ENCODE measurements at regions of chr12 and their contacts with region 1.

Region 1: DNA sequence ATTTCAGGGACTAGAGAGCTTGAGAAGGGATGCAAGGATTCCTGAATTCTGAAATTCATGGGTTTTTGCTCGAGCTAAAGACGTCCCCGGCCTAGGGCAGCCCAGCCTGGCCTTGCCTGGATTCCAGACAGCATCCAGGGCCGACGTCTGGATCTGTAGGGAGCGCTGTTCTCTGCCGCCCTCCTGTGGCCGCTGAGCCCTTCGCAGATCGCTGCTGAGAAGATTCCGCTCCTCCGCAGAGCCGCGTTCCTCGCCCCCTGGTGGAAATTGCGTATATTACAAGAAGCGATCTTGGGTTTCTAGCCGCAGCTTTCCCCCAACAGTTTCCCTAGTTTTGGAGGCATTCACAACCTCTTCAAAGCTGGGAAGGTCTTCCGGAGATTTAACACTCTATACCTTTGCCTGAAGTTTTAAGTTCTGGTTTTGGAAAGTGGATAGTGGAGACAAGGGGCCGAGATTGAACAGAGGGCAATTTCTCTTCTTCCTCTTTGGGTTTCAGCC is 5.1 kb downstream of the CISTR start:
- DNase-seq: peak; percentile 86
- H3K4me3 ChIP-seq: no peak overlapping the region
- H3K27ac ChIP-seq: no peak overlapping the region
- H3K27me3 ChIP-seq: peaks cover 68% of the 10 kb centered on the region
- CTCF ChIP-seq: peak; percentile 100

Region 2: DNA sequence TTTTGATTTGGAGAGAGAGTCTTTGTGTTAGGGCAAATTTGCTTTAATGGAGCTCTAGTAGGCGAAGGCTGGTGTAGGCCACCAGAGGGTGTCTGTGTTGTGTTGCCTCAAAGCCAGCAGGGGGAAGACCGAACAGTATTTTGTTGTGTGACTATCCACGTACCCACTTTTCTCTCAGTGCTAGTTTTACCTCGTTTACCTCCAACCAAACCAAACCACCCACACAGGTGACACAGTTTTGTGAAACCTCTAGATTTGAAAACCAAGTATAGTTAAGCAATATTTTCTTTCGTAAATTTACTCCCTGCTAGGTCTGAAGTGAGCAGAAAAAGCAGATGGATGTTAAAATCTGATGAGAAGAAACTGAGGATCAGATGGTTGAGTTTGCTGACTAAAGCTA is 203.1 kb before region 1 on chr12:
- CTCF ChIA-PET with region 1: interaction called, 22 read pairs
- POLR2A ChIA-PET with region 1: no interaction called
- DNase-seq: peak; percentile 41
- H3K4me3 ChIP-seq: no peak overlapping the region
- H3K27ac ChIP-seq: peak overlapping the region; percentile 52
- H3K27me3 ChIP-seq: no peaks in the 10 kb centered on the region
- CTCF ChIP-seq: peak; percentile 98

Region 3: GRCh38 chr12:53696285-53696654 is 50.4 kb before region 1 on chr12:
- CTCF ChIA-PET with region 1: interaction called, 314 read pairs
- POLR2A ChIA-PET with region 1: no interaction called
- DNase-seq: peak; percentile 41
- H3K4me3 ChIP-seq: no peak overlapping the region
- H3K27ac ChIP-seq: no peak overlapping the region
- H3K27me3 ChIP-seq: peaks cover 46% of the 10 kb centered on the region
- CTCF ChIP-seq: no peak

Region 4: GRCh38 chr12:53719649-53720048 is 27.0 kb before region 1 on chr12:
- CTCF ChIA-PET with region 1: interaction called, 439 read pairs
- POLR2A ChIA-PET with region 1: no interaction called
- DNase-seq: no peak
- H3K4me3 ChIP-seq: no peak overlapping the region
- H3K27ac ChIP-seq: no peak overlapping the region
- H3K27me3 ChIP-seq: no peaks in the 10 kb centered on the region
- CTCF ChIP-seq: no peak

Region 5: GRCh38 chr12:53757095-53757770 is 10.6 kb after region 1 on chr12:
- CTCF ChIA-PET with region 1: interaction called, 91 read pairs
- POLR2A ChIA-PET with region 1: no interaction called
- DNase-seq: no peak
- H3K4me3 ChIP-seq: no peak overlapping the region
- H3K27ac ChIP-seq: no peak overlapping the region
- H3K27me3 ChIP-seq: peaks cover 46% of the 10 kb centered on the region
- CTCF ChIP-seq: peak; percentile 92

Region 6: GRCh38 chr12:53806721-53807120 is 60.1 kb after region 1 on chr12:
- CTCF ChIA-PET with region 1: interaction called, 13 read pairs
- POLR2A ChIA-PET with region 1: no interaction called
- DNase-seq: peak; percentile 37
- H3K4me3 ChIP-seq: no peak overlapping the region
- H3K27ac ChIP-seq: peak overlapping the region; percentile 31
- H3K27me3 ChIP-seq: peaks cover 9% of the 10 kb centered on the region
- CTCF ChIP-seq: no peak

Region 7: DNA sequence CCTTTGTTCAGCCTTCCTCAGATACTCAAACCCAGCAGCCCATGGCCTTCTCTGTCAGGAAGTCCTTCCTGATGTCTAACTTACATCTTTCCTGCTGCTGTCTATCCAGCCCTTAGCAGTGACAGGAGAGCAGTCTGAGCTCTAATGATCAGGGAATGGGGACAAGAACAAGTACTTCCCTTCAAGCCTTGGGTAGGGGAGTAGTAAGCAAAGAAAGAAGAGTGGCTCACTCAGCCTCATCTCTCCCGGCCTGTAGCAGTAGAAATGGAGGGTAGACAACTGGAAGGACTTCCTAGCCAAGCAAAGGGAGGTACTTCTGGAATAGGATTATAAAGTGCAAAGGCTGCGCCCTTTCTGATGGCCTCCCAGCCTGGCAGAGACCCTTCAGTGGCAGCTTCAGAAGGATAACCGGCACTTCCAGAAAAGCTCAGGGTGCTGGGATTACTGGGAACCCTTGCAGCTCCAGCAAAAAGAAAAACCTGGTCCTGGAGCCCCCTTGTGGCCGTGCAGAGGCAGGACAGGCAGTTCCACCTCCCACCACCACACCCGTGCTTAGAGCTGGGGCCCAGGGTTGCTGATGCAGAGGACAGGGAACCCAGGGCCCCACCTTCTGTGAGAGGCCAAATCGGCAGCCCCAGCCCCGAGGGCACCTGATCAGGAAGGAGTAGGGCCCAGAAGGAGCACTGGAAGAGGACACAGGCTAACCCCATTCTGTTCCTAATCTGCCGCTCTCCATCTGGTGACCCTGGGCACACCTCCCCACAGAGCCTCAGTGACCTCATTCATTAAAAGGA is 454.6 kb after region 1 on chr12:
- CTCF ChIA-PET with region 1: interaction called, 11 read pairs
- POLR2A ChIA-PET with region 1: no interaction called
- DNase-seq: peak; percentile 48
- H3K4me3 ChIP-seq: no peak overlapping the region
- H3K27ac ChIP-seq: no peak overlapping the region
- H3K27me3 ChIP-seq: peaks cover 33% of the 10 kb centered on the region
- CTCF ChIP-seq: peak; percentile 100